CD8-positive, alpha-beta T cell (primary cell): ENCODE measurements at regions of chr15 and their contacts with region 1.

Region 1: DNA sequence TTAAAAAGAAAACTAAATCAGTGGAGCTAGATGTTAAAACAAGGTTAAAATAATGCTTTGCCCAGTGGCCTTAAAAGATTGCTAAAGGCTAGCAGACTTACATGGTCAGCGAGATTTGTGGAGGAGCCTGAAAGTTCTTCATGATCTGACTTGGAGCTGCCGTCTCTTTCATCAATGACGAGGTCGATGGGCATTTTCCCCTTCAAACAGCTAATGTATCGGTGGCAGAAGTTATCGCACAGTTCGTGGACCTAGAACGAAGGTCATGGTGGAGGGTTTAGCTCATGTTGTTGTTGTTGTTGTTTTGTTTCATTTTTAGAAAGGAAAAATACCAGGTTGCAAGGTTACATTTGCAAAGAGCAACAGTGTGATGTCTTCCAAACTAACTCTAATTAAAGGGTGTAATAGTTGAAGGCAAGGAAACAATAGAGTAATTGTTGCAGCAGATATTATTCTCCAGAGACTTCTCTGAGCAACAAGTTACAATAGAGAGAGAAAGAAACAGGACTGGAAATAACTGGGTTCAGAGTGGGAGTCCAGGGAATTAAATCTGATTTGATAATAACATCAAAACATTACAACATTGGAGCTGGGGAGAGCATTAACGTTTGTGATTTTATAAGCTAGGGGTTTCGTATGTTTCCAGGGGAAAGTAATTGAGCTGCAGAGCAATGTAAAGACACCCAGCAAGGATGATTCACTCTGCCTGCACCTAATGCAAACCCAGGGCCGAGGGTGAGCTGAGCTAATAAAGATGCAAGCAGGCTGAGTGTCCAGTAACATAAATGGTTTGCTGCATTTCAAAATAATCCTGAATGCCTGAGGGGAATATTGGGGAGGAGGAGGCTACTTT is 6.6 kb downstream of the MEIS2 start:
- DNase-seq: no peak
- ATAC-seq: no peak
- H3K4me3 ChIP-seq: no peak overlapping the region
- H3K4me3 Mint-ChIP-seq: no peak overlapping the region
- H3K27ac ChIP-seq: no peak overlapping the region
- H3K27ac Mint-ChIP-seq: no peak overlapping the region
- H3K4me1 ChIP-seq: peaks cover 8% of the 10 kb centered on the region
- H3K4me1 Mint-ChIP-seq: peaks cover 20% of the 10 kb centered on the region
- H3K27me3 ChIP-seq: peaks cover 13 to 15% of the 10 kb centered on the region in 2 experiments
- H3K27me3 Mint-ChIP-seq: peaks cover 70% of the 10 kb centered on the region
- CTCF ChIP-seq: no peak

Region 2: GRCh38 chr15:36844534-36844998 is 249.1 kb before region 1 on chr15:
- CTCF ChIA-PET with region 1: no interaction called
- POLR2A ChIA-PET with region 1: no interaction called
- intact Hi-C with region 1: loop called in 1 of 2 experiments (anchors 5 kb)
- DNase-seq: no peak
- ATAC-seq: no peak
- H3K4me3 ChIP-seq: no peak overlapping the region
- H3K4me3 Mint-ChIP-seq: no peak overlapping the region
- H3K27ac ChIP-seq: no peak overlapping the region
- H3K27ac Mint-ChIP-seq: no peak overlapping the region
- H3K4me1 ChIP-seq: no peaks in the 10 kb centered on the region
- H3K4me1 Mint-ChIP-seq: no peaks in the 10 kb centered on the region
- H3K27me3 ChIP-seq: no peaks in the 10 kb centered on the region
- H3K27me3 Mint-ChIP-seq: peaks cover 19% of the 10 kb centered on the region
- CTCF ChIP-seq: no peak